PC-9 (cell line): ENCODE measurements at regions of chr14 and their contacts with region 1.

Region 1: DNA sequence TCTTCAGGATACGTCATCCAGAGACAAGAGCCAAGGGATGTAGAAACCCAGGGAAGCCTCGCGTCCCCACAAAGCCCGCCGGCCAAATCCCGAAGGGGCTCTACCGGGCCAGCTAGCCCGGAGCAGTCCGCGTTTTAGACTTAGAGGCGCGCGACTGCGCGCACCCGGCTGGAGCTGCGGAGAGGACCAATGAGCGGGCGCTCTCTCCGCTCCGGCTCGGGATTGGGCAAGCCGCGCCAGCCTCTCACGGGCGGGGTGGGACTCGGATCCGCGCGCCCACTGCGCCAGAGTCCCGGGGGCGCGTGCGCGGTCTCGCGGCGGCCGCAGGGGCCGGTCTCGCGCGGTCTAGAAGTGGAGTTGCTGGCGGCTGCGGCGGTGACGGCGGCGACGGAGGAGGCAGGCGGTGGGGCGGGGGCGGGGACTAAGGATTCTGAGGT is 239 bp upstream of the PALS1 start:
- DNase-seq: peak; percentile 91 to 99
- H3K4me3 ChIP-seq: peak overlapping the region; percentile 93
- H3K27ac ChIP-seq: peak overlapping the region; percentile 91
- H3K4me1 ChIP-seq: peaks cover 17% of the 10 kb centered on the region; the same call in 1 of the 2 replicates
- H3K27me3 ChIP-seq: no peaks in the 10 kb centered on the region
- CTCF ChIP-seq: no peak

Region 2: GRCh38 chr14:67166450-67166853 is 74.5 kb before region 1 on chr14:
- CTCF ChIA-PET with region 1: no interaction called
- POLR2A ChIA-PET with region 1: interaction called, 20 read pairs
- intact Hi-C with region 1: loop called (anchors 1 kb)
- DNase-seq: peak; percentile 44 to 51
- H3K4me3 ChIP-seq: no peak overlapping the region
- H3K27ac ChIP-seq: no peak overlapping the region
- H3K4me1 ChIP-seq: peaks cover 13% of the 10 kb centered on the region
- H3K27me3 ChIP-seq: no peaks in the 10 kb centered on the region
- CTCF ChIP-seq: peak; percentile 97

Region 3: DNA sequence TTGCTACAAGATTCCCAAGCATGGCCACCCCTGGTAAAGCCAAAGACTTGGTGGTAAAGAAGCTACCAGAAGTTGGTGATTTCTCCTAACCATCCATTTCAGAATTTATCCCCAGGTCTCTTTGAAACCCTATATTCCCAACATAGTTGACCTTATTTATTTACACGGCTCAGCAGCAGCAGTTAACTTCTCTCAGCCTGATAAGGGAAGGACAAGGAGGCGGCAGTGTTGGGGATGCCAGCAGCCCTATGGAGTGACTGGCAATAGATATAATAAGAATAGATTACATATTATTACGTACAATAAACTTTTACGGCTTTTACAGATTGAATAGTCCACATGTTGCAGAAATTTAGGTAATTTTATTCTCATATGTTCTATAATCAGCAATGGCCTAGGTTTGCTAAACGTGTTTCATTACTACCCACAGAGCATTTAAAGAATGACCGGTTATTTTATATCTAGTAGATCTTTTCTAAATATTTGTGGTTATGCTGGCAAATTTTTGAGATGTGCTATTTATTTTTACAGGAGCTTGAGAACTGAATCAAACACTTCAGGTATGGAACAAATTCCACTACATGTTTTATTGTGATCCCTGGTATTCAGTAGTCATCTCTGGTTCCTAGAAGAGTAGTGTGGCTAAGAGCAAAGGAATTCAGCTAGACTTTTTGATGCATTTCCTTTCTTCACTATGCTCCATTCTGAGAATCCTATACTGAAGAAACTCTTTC is 19.6 kb before region 1 on chr14:
- CTCF ChIA-PET with region 1: no interaction called
- POLR2A ChIA-PET with region 1: interaction called, 4 read pairs
- intact Hi-C with region 1: loop called (anchors 1 kb)
- DNase-seq: peak; percentile 24 to 97
- H3K4me3 ChIP-seq: no peak overlapping the region
- H3K27ac ChIP-seq: peak overlapping the region; percentile 33; the same call in 1 of the 2 replicates
- H3K4me1 ChIP-seq: peaks cover 24% of the 10 kb centered on the region
- H3K27me3 ChIP-seq: no peaks in the 10 kb centered on the region
- CTCF ChIP-seq: no peak

Region 4: GRCh38 chr14:67311905-67312304 is 70.9 kb after region 1 on chr14:
- CTCF ChIA-PET with region 1: no interaction called
- POLR2A ChIA-PET with region 1: interaction called, 15 read pairs
- intact Hi-C with region 1: no loop called
- DNase-seq: peak; percentile 33 to 95
- H3K4me3 ChIP-seq: no peak overlapping the region
- H3K27ac ChIP-seq: no peak overlapping the region
- H3K4me1 ChIP-seq: peaks cover 25% of the 10 kb centered on the region
- H3K27me3 ChIP-seq: no peaks in the 10 kb centered on the region
- CTCF ChIP-seq: no peak

Region 5: DNA sequence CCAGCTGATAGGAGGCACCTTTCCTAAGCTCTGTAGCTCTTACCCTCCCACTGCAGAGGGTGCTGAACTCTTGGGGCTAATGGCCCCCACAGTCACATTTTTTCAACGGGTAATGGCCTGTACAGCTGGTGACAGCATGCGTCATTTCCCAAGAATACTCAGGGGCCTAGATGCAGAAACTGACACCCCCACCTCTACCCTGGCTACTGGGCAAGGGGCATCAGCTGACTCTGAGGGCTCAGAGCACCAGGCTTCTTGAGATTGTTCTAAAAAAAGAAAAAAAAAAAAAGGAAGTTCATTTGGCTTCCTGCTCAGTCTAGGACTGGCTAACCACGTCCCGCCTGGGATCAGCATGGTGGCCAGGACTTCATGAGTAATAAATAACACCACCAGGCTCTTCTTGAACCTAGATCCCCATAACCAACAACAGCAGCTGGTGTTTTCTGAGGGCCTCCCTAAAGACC is 1516.7 kb after region 1 on chr14:
- CTCF ChIA-PET with region 1: no interaction called
- POLR2A ChIA-PET with region 1: interaction called, 17 read pairs
- intact Hi-C with region 1: no loop called
- DNase-seq: no peak
- H3K4me3 ChIP-seq: no peak overlapping the region
- H3K27ac ChIP-seq: no peak overlapping the region
- H3K4me1 ChIP-seq: peaks cover 7% of the 10 kb centered on the region
- H3K27me3 ChIP-seq: no peaks in the 10 kb centered on the region
- CTCF ChIP-seq: no peak